PC-3 (cell line): ENCODE measurements at regions of chr7 and their contacts with region 1.

Region 1: DNA sequence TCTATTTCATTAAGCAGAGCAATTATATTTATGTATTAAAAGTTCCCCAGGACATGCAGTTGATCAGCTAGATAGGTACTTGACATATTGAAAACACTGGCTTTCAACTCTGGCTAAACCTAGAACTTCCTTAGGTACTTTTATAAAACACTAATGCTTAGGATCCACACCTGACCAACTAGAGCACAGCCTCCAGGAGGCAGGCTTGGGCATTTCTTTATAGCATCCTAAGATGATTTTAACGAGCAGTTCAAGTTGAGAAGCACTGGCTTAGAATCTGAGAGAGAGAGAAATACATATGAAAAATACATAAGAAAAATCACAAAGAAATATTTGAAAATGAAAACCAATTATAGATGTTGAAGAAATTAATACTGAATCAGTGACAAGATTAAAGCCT is 20.8 kb downstream of the SLC26A5 start:
- DNase-seq: peak; percentile 12
- ATAC-seq: peak; percentile 43; the same call in 1 of the 2 replicates
- H3K4me3 ChIP-seq: no peak overlapping the region
- H3K27ac ChIP-seq: no peak overlapping the region
- H3K4me1 ChIP-seq: no peaks in the 10 kb centered on the region
- H3K27me3 ChIP-seq: no peaks in the 10 kb centered on the region
- CTCF ChIP-seq: peak; percentile 43; the same call in 1 of the 2 replicates

Region 2: DNA sequence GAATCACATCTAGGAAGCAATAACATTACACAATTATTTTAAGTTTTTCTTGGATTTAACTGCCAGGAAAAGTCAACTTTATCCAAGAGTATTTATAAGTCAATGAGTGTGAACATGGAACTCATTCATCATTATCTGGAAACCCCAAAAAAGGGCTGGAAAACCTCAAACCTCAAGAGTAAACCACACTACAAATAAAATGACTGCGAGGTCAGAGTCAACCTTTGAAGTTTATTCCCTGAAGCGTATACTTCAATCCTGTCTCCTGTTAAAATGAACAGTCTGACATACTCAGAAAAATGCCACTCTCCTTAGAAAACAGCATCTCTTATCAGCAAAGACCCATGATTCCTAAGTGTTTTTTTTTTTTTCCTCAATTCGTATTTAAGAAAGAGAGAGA is 477.7 kb after region 1 on chr7:
- CTCF ChIA-PET with region 1: no interaction called
- POLR2A ChIA-PET with region 1: no interaction called
- intact Hi-C with region 1: no loop called
- DNase-seq: no peak
- ATAC-seq: no peak
- H3K4me3 ChIP-seq: no peak overlapping the region
- H3K27ac ChIP-seq: no peak overlapping the region
- H3K4me1 ChIP-seq: no peaks in the 10 kb centered on the region
- H3K27me3 ChIP-seq: peaks cover 5% of the 10 kb centered on the region; the same call in 1 of the 2 replicates
- CTCF ChIP-seq: no peak

Region 3: GRCh38 chr7:104839842-104840241 is 1414.7 kb after region 1 on chr7:
- CTCF ChIA-PET with region 1: interaction called, 16 read pairs
- POLR2A ChIA-PET with region 1: no interaction called
- intact Hi-C with region 1: no loop called
- DNase-seq: no peak
- ATAC-seq: no peak
- H3K4me3 ChIP-seq: no peak overlapping the region
- H3K27ac ChIP-seq: no peak overlapping the region
- H3K4me1 ChIP-seq: no peaks in the 10 kb centered on the region
- H3K27me3 ChIP-seq: peaks cover 27% of the 10 kb centered on the region
- CTCF ChIP-seq: no peak